ENCODE measurements at regions of chr5 and their contacts with region 1.

Region 1: GRCh38 chr5:142280066-142280911 is 44.5 kb downstream of the SPRY4 start:
- DNase-seq: peak; percentile 83
- ATAC-seq: peak; percentile 88

Region 2: DNA sequence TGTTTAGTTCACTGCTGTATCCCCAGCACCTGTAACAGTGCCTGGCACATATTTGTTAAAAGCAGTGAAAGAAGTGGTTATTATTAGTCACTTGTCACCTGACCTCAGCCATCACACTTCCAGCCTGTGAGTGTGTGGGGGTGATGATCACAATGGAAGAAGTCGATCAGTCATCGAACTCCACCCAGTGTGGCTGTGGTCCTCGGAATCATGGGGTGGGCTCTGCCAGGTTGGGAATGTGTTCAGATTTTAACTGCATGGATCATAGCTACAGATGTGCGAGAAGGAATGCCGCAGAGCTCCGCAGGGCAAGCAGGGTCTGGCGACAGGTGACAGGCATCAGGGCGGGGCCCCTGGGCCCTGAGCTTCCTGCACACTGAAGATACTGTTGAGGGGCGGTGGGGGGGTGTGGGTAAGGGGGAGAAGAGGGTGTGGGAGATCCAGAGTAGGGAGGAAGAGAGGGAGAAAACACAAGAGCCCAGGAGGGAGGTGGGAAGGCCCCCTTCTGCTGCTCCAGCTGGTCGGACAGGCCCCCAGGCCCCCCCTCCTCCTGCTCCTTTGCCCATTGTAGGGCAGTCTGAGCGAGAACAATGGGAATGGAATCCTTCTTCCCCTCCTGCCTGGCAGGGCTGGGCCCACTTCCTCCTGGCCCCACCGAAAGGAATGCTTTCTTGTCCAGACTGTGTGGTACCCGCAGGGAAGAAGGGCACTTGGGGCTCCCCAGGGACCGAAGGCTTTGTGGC is 45.1 kb before region 1 on chr5:
- intact Hi-C with region 1: no loop called
- DNase-seq: no peak
- ATAC-seq: no peak

Region 3: GRCh38 chr5:142248853-142249462 is 31.3 kb before region 1 on chr5:
- intact Hi-C with region 1: no loop called
- DNase-seq: peak; percentile 82
- ATAC-seq: peak; percentile 93

Region 4: DNA sequence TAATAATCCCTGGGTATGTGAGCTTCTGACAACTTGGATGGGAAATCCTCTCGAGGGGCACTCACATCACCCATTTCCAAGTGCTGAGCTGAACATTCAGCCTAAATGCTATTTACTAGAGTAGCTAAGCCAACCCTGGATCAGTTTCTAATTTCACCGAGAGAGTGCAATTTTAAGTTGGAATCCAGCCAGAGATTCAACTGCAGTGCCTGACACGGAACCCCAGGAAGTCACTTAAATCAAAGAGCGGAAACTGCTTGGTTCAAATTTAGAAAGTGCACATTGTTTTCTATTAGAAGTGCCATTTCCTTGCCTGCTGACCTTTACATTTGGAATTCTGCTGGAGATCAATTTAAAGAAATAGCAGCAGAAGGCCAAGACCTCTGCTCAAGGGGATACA is 35.8 kb after region 1 on chr5:
- intact Hi-C with region 1: loop called (anchors 5 kb)
- DNase-seq: no peak
- ATAC-seq: peak; percentile 49

Region 5: DNA sequence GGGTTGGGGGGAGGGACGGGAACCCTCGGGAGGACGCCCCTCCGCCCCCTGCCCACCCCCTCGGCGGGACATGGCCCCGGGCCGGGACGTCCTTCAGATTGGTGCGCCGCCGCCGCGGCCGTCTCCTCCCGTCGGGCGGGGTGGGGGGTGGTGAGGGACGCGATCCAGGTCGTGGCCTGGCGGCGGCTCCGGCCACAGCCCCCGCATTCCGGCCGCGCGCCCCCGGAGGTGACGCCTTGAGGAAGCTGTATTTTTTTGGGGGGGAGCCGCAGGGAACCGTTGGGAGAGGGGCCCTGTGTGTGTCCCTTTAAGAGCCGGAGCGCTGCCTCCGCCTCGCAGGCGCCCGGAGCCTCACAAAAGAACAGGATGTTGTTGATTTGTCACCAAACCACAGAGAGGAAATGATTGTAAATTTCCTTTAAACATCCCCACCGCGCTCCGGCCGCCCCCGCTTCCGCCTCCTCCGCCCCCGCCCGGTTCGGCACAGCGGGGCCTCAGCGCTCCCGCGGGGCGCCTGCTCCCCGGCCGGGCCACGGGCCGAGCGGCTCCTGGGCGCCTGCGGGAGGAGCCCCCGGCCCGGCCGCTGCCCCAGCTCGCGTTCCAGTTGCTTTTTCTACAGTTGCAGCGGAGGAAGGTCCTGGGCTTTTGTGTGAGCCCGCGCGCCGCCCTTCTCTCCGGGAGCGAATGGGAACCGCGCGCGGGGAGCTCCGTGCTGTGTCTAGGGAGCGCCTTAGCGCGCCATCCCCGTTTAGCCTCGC is 76.6 kb after region 1 on chr5:
- intact Hi-C with region 1: loop called (anchors 5 kb)
- DNase-seq: peak; percentile 94
- ATAC-seq: peak; percentile 86

Measured in Right ventricle myocardium inferior (tissue), 1 donor.